IMR-90 (cell line): ENCODE measurements at regions of chr3 and their contacts with region 1.

Region 1: GRCh38 chr3:79497447-79498111 is 270.2 kb downstream of the ROBO1 start:
- DNase-seq: peak; percentile 11
- ATAC-seq: 0 out of 2 replicates have a peak, but pooled peaks have one; percentile 21
- H3K4me3 ChIP-seq: no peak overlapping the region
- H3K27ac ChIP-seq: no peak overlapping the region
- H3K4me1 ChIP-seq: no peaks in the 10 kb centered on the region
- H3K27me3 ChIP-seq: no peaks in the 10 kb centered on the region
- CTCF ChIP-seq: peak; percentile 73
- POLR2A ChIP-seq: no peak
- RAD21 ChIP-seq: peak; percentile 59

Region 2: GRCh38 chr3:79032686-79033318 is 464.8 kb before region 1 on chr3:
- CTCF ChIA-PET with region 1: no interaction called
- POLR2A ChIA-PET with region 1: no interaction called
- dilution Hi-C with region 1: no loop called
- in situ Hi-C with region 1: no loop called
- intact Hi-C with region 1: loop called (anchors 5 kb)
- DNase-seq: peak; percentile 67
- ATAC-seq: peak; percentile 52; the same call in 1 of the 2 replicates
- H3K4me3 ChIP-seq: no peak overlapping the region
- H3K27ac ChIP-seq: no peak overlapping the region
- H3K4me1 ChIP-seq: peaks cover 2% of the 10 kb centered on the region; the same call in 1 of the 2 replicates
- H3K27me3 ChIP-seq: no peaks in the 10 kb centered on the region
- CTCF ChIP-seq: peak; percentile 69
- POLR2A ChIP-seq: no peak
- RAD21 ChIP-seq: peak; percentile 79

Region 3: DNA sequence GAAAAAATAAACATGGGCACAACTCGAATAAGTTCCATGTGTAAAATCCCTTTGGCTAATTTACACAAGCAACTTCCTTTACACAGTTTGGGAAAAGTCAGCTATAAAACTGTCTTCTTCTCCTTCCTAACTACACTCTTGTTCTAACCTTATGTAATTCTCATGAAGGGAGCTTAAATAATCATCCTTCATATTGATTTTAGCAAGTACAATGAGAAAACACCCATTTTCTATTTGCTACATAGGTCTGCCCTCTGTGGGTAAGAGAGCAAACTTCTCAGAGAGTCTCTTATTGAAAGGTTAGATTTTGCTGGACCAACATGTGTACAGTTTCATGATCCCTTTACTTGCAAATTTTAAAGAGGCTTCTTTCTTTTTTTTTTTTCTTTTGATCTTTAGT is 128.3 kb before region 1 on chr3:
- CTCF ChIA-PET with region 1: no interaction called
- POLR2A ChIA-PET with region 1: no interaction called
- dilution Hi-C with region 1: no loop called
- in situ Hi-C with region 1: no loop called
- intact Hi-C with region 1: loop called (anchors 5 kb)
- DNase-seq: peak; percentile 43
- ATAC-seq: peak; percentile 56; the same call in 1 of the 2 replicates
- H3K4me3 ChIP-seq: no peak overlapping the region
- H3K27ac ChIP-seq: no peak overlapping the region
- H3K4me1 ChIP-seq: peaks cover 6% of the 10 kb centered on the region; the same call in 1 of the 2 replicates
- H3K27me3 ChIP-seq: no peaks in the 10 kb centered on the region
- CTCF ChIP-seq: peak; percentile 42
- POLR2A ChIP-seq: no peak
- RAD21 ChIP-seq: peak; percentile 44